GM23248 (cell line): ENCODE measurements at regions of chr9 and their contacts with region 1.

Region 1: DNA sequence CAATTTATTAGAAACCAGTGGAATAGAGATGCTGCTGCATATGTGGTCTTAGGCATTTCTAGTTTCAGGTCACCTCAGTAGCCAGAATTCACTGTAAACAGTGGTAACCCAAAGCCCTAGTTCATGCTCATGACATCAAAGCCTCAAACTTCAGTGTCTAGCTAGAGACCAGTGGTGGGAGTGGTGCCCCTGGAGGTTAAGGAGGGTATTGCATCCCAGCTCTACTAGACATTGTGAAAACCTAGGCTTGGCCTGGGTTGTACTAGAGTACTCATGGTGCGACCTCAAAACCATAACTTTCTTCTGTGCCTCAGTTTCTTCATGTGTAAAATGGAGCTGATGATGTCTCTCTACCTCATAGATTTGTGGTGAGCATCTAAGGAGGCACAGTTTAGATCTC is 18.8 kb downstream of the COL5A1 start:
- DNase-seq: no peak
- H3K4me3 ChIP-seq: no peak overlapping the region
- H3K27ac ChIP-seq: peak overlapping the region; percentile 97
- H3K4me1 ChIP-seq: peaks cover 41% of the 10 kb centered on the region
- H3K27me3 ChIP-seq: no peaks in the 10 kb centered on the region

Region 2: GRCh38 chr9:134455934-134456739 is 204.3 kb before region 1 on chr9:
- in situ Hi-C with region 1: loop called (anchors 25 kb)
- DNase-seq: peak; percentile 99
- H3K4me3 ChIP-seq: peak overlapping the region; percentile 41
- H3K27ac ChIP-seq: peak overlapping the region; percentile 99
- H3K4me1 ChIP-seq: peaks cover 23% of the 10 kb centered on the region
- H3K27me3 ChIP-seq: no peaks in the 10 kb centered on the region

Region 3: DNA sequence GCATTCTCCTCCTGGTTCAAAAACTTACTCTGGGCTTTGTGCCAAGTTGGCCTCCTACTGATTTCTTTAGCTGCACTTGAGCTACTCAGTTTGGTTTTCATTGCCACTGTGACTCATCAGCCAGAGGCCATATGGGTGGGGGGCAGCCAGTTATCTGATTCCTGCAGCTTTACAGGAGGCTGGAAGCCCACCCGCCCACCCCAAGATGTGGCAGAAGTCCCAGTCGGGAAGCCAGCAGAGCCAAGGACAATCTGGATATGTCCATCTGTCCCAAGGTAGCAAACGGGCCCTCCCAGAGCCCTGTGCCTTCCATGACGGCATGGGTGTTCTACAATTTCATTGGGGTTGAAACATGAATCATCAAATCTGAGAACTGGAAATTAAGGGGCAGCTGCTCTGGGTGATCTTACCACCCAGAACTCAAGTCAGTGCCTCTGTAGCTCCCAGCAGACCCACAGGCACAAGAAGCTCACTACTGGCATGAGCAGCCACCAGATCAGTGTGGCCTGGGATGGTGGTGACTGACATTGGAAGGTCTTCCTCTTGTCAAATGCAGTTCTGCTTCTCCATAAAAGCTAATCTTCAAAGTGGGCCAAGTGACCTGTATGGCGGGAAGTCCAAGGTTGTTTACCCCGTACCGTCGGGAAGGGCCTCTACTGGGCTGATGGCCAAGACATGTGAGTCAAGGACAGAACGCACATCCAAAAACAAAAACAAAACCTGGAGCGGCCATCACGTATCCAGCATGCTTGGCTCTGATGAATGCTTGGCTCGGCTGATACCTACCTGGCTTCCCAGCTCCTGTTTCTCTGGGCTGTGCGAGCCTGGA is 235.8 kb after region 1 on chr9:
- in situ Hi-C with region 1: no loop called
- DNase-seq: peak; percentile 53
- H3K4me3 ChIP-seq: no peak overlapping the region
- H3K27ac ChIP-seq: no peak overlapping the region
- H3K4me1 ChIP-seq: no peaks in the 10 kb centered on the region
- H3K27me3 ChIP-seq: peaks cover 34% of the 10 kb centered on the region